ENCODE measurements at regions of chr14 and their contacts with region 1.

Region 1: GRCh38 chr14:60324837-60325236 is 75.8 kb downstream of the PPM1A start:
- DNase-seq: no peak
- ATAC-seq: no peak
- H3K4me3 ChIP-seq: no peak overlapping the region
- H3K27ac ChIP-seq: no peak overlapping the region
- H3K4me1 ChIP-seq: peaks cover 4 to 16% of the 10 kb centered on the region in 2 donors
- H3K27me3 ChIP-seq: no peaks in the 10 kb centered on the region
- CTCF ChIP-seq: no peak
- POLR2A ChIP-seq: no peak

Region 2: DNA sequence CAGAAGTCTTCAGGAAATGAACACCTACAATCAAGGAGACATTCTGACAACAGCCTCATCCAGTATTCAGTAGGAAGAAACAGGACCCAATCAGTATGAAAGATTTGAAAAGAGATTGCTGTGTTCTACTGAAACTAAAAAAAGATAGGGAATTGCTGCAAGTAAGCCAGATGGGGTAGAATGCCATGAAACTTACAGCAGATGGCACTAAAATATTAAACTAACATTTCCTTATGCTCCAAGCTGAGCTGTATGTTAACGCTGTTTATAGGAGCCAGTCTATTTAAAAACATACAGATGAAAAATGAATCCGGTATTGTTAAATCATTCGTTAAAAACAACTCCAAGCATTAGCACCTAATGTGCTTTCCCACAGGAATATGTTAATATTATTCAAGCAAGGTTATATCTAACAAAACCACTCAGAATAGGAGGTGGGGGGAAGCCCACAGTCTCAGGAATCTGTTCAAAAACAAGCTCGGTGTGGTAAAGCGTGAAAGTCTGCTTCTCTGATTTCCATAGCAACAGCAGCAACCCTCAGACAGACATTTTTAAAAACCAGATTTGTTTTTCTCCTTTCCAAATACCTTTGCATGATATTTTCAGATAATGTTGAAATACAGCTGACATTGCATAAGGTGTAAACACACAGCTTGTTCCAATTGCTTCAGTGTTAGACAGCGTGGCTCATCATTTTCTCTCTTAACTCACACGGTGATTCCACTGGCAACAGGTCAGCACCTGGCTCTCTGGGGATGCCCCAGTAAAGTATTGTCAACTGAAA is 616.9 kb before region 1 on chr14:
- in situ Hi-C with region 1: no loop called
- intact Hi-C with region 1: no loop called
- DNase-seq: peak in 1 of 2 donors; percentile 21
- ATAC-seq: peak; percentile 79 to 81
- H3K4me3 ChIP-seq: no peak overlapping the region
- H3K27ac ChIP-seq: no peak overlapping the region
- H3K4me1 ChIP-seq: no peaks in the 10 kb centered on the region
- H3K27me3 ChIP-seq: no peaks in the 10 kb centered on the region
- CTCF ChIP-seq: no peak
- POLR2A ChIP-seq: no peak

Region 3: GRCh38 chr14:60035177-60035576 is 289.7 kb before region 1 on chr14:
- in situ Hi-C with region 1: no loop called
- intact Hi-C with region 1: no loop called
- DNase-seq: no peak
- ATAC-seq: no peak
- H3K4me3 ChIP-seq: no peak overlapping the region
- H3K27ac ChIP-seq: no peak overlapping the region
- H3K4me1 ChIP-seq: no peaks in the 10 kb centered on the region
- H3K27me3 ChIP-seq: no peaks in the 10 kb centered on the region
- CTCF ChIP-seq: no peak
- POLR2A ChIP-seq: no peak

Region 4: GRCh38 chr14:60303745-60304144 is 21.1 kb before region 1 on chr14:
- in situ Hi-C with region 1: no loop called
- intact Hi-C with region 1: loop called (anchors 2 kb)
- DNase-seq: peak; percentile 10 to 30
- ATAC-seq: peak; percentile 47 to 75
- H3K4me3 ChIP-seq: no peak overlapping the region
- H3K27ac ChIP-seq: no peak overlapping the region
- H3K4me1 ChIP-seq: peaks cover 29 to 33% of the 10 kb centered on the region in 2 donors
- H3K27me3 ChIP-seq: no peaks in the 10 kb centered on the region
- CTCF ChIP-seq: no peak
- POLR2A ChIP-seq: no peak

Region 5: DNA sequence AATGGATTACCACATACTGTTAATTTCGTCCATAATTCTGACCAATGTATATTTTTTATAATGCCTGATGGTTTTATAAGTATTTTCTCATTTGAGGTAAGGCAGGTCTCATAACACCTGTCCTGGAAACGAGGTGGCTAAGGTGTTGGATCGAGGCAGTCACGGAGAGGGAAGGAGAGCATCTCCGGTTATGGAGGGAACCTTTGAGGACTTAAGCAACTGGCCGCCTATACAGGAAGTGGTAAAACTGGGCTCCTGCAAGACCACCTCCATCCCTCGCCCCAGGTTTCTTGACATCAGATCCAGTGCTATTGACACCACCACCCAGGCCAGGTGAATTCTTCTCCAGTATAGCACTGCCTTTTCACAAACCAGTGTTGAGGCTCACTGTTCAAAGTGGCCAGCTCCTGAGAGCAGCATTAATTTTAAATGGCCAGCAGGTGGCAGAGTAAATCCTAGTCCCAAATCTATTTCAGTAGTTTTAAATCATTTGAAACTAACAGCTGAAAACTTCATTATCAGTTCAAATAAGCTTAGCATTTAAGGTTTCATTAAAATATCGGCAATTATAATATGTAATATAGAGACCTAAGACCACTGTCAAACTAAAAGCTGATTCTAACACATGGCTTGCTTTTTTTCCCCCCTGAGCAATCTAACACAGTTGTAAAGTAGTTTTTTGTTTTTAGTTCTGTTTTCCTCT is 25.0 kb after region 1 on chr14:
- in situ Hi-C with region 1: no loop called
- intact Hi-C with region 1: no loop called
- DNase-seq: no peak
- ATAC-seq: peak; percentile 62 to 69
- H3K4me3 ChIP-seq: peak overlapping the region; percentile 0 to 47 (median 24)
- H3K27ac ChIP-seq: peak overlapping the region in 1 of 4 donors; percentile 23
- H3K4me1 ChIP-seq: peaks cover 0 to 12% of the 10 kb centered on the region in 2 donors
- H3K27me3 ChIP-seq: no peaks in the 10 kb centered on the region
- CTCF ChIP-seq: peak; percentile 42 to 75 (median 56)
- POLR2A ChIP-seq: no peak

Region 6: GRCh38 chr14:60585676-60586075 is 260.8 kb after region 1 on chr14:
- in situ Hi-C with region 1: no loop called
- intact Hi-C with region 1: no loop called
- DNase-seq: no peak
- ATAC-seq: no peak
- H3K4me3 ChIP-seq: no peak overlapping the region
- H3K27ac ChIP-seq: no peak overlapping the region
- H3K4me1 ChIP-seq: peaks cover 0 to 9% of the 10 kb centered on the region in 2 donors
- H3K27me3 ChIP-seq: no peaks in the 10 kb centered on the region
- CTCF ChIP-seq: no peak
- POLR2A ChIP-seq: no peak

Measured in gastrocnemius medialis (tissue), 4 donors.